Activated CD4-positive, alpha-beta memory T cell treated with anti-CD3 and anti-CD28 coated beads for 36 hours (primary cell): ENCODE measurements at regions of chr9 and their contacts with region 1.

Region 1: DNA sequence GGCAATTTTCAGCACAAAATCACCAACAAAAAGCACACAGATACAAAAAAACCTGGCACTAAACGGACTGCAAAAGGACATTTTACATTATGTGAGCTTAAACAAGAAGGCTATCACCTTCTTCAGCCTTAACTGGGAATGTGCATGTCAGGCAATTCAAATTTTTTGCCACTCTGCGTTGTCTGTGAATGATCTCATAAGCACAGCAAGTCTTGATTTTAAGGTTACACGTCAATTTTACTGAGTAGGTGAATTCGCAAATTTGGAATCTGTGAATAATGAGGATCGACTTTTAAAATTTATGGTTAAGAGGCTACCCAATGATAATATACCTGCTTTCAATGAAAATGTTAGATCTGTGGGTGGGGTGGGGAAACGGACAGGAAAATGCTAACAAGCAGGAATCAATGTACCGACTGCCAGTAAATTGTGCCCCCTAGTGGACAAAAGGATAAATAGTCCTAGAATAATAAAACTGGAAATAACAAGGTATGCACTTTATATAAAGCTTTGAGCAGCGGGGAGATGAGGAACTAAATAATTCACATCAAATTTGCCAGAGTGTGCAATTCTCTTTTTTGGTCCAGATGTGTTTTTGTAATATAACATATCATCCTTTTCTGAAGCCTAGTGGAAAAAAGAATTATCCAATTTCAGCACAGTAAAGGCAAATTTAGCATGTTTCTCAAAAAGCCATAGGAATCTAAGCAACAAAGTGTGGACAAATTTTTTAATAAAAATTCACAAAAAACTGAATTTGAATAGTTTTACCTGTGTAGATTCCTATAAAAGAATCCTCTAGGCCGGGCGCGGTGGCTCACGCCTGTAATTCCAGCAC is 20.5 kb downstream of the EQTN start:
- DNase-seq: no peak
- H3K4me3 Mint-ChIP-seq: no peak overlapping the region
- H3K27ac Mint-ChIP-seq: no peak overlapping the region
- H3K4me1 Mint-ChIP-seq: no peaks in the 10 kb centered on the region
- H3K27me3 Mint-ChIP-seq: no peaks in the 10 kb centered on the region

Region 2: GRCh38 chr9:27033823-27034403 is 242.5 kb before region 1 on chr9:
- CTCF ChIA-PET with region 1: interaction called, 9 read pairs
- POLR2A ChIA-PET with region 1: no interaction called
- intact Hi-C with region 1: loop called (anchors 1 kb)
- DNase-seq: peak; percentile 58
- H3K4me3 Mint-ChIP-seq: no peak overlapping the region
- H3K27ac Mint-ChIP-seq: no peak overlapping the region
- H3K4me1 Mint-ChIP-seq: no peaks in the 10 kb centered on the region
- H3K27me3 Mint-ChIP-seq: no peaks in the 10 kb centered on the region